Ascending aorta (tissue), 2 donors: ENCODE measurements at regions of chr1 and their contacts with region 1.

Region 1: DNA sequence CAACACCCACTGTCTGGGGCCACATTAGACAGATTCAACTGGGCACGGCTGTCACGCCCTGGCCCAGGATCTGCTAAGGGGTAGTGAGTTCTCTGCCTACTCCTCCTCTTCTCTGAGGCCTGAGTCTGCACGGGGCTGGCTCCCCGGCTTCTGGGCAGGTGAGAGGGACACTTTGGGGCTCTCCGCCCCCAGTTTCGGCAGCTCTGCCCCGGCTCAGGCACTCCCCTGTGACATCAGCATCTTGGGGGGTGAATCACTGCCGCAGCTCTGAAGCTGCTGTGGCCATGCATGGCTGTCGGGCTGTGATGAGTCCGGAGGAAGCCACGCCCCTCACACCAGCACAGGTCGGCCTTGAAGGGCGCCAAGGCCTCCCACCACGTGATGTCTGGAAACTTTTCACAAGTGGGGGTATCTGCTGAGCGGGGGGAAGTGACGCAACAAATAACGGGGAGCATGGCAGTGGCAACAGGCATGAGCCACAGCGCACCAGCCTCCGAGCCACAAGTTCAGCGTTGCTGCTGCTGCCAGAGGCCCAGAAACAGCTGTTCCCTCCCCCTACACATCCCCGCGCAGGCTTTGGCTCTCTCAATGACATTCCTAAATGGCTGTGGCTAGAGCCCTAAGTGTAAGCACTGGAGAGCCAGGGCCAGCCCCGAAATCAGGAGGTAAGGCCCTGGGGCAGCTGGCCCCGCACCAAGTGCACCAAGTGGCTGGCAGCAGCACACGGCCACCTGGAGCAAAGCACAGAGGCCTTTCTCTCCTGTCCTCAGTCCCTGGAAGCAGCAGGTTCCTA is 26.3 kb downstream of the ZBTB17 start:
- DNase-seq: peak; percentile 97 to 99
- H3K4me3 ChIP-seq: peak overlapping the region; percentile 12 to 51
- H3K27ac ChIP-seq: peak overlapping the region; percentile 96 to 98
- H3K4me1 ChIP-seq: peaks cover 55 to 66% of the 10 kb centered on the region in 2 donors
- H3K27me3 ChIP-seq: no peaks in the 10 kb centered on the region
- CTCF ChIP-seq: no peak

Region 2: DNA sequence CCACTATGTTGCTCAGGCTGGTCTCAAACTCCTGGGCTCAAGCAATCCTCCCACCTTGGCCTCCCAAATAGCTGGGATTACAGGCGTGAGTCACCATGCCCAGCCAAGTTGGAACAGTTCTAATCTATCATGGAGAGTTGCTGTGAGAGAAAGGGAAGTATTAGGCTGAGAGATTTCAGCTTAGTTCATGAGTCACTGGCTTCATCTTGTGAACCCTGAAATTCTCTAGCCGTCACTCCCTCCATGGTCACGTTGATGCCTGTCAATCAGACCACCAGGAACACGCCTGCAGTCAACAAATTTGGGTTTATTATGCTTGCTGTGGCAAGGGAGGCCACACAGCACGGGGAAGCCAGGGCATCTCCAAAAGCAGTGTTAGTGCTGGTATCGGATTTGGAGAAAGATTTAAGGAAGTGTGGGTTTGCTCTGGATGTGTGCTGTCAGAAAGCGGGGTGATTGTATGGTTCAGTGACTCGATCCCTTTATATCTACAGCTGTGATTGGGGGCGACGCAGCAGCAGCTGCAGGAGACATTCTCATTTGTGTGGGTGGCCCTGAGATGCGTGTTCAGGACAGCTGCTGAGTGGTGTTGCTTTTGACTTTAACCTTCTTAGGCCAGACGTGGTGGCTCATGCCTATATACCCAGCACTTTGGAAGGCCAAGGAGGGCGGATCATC is 160.9 kb before region 1 on chr1:
- intact Hi-C with region 1: loop called (anchors 5 kb)
- DNase-seq: peak in 1 of 2 donors; percentile 75
- H3K4me3 ChIP-seq: no peak overlapping the region
- H3K27ac ChIP-seq: peak overlapping the region; percentile 62 to 80
- H3K4me1 ChIP-seq: peaks cover 0 to 41% of the 10 kb centered on the region in 2 donors
- H3K27me3 ChIP-seq: no peaks in the 10 kb centered on the region
- CTCF ChIP-seq: no peak

Region 3: DNA sequence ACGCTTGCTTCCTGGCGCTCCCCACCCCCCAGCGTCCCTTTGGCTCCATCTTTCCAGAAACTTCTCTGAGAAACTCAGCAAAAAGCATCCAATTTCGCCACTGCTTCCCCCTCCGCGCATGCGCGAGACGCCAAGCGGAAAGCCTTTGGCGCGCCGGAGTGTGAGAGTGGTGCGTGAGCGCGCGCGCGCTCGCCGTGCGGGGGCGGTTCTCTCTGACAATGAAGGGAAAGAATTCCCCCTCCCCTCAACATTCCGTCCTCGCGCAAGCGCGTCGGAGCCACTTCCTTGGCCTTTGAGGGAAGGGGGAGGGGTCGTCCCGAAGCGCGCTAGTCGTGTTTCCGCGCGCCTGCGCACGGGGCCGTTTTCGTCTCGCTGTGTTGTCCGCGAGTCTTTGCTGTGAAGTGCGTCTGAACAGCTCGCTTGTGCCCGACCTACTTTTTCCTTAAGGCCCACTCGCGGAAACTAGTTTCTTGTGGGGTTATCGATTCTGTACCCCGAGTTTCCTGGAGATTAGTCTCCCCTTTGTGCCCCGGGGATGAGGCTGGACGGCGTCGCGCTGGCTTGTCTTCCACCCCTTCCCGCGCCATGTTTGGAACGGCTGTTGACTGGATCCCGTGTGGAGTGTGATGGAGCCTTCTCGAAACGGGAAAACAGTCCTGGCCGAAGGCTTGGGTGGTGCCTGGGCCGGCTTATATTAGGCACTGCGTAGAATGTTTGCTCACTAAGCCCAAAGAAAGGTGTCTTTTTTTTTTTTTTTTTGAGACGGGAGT is 113.7 kb before region 1 on chr1:
- intact Hi-C with region 1: loop called (anchors 1 kb)
- DNase-seq: peak; percentile 97 to 100
- H3K4me3 ChIP-seq: peak overlapping the region; percentile 79 to 95
- H3K27ac ChIP-seq: peak overlapping the region; percentile 100
- H3K4me1 ChIP-seq: peaks cover 0 to 30% of the 10 kb centered on the region in 2 donors
- H3K27me3 ChIP-seq: no peaks in the 10 kb centered on the region
- CTCF ChIP-seq: no peak

Region 4: DNA sequence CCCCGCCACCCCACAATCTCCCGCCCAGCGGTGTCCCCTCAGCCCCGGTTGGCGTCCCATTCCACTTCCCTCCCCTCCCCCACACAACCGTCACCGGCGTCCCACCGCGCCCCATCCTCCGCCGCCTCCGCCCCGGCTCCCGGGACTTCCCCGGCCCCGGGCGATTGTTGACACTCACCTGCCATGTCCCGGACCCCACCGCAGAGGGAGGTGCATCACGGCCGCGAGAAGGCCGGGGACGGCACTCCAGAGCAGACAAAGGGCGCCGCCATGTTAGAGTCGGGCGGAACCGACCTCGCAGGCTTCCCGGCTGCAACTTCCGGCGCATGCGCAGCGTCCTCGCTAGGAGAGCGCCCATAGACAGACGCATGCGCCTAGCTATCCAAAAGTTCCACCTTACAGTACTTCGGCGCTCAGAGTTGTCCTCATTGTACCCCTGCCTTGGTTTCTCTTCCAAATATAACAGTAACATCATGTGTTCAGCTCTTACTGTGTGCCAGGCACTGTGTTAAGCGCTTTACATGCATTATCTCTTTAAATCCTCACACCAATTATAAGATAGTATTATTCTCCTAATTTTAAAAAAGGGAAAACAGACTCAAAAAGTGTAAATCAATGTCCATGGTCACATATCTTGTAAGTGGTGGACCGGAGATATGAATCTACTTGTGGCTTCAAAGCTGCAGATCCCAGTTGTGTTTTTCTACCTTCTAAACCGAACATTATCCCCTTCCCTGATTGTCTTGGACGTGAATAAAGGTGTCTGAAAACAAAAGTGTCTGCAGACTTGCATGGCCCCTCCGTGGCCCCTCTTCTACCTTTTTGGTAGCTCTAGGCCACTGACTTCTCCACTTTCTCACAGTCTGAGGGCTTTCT is 26.4 kb after region 1 on chr1 and contains the start of gene ZBTB17:
- intact Hi-C with region 1: loop called (anchors 2 kb)
- DNase-seq: peak; percentile 69 to 96
- H3K4me3 ChIP-seq: peak within 1 kb of the TSS; percentile 81 to 84
- H3K27ac ChIP-seq: peak within 1 kb of the TSS; percentile 77 to 80
- H3K4me1 ChIP-seq: peaks cover 5 to 14% of the 10 kb centered on the region in 2 donors
- H3K27me3 ChIP-seq: no peaks in the 10 kb centered on the region
- CTCF ChIP-seq: peak in 1 of 3 experiments; percentile 6
- total RNA-seq, gene ZBTB17: 155 TPM